ENCODE measurements at regions of chr17 and their contacts with region 1.

Region 1: DNA sequence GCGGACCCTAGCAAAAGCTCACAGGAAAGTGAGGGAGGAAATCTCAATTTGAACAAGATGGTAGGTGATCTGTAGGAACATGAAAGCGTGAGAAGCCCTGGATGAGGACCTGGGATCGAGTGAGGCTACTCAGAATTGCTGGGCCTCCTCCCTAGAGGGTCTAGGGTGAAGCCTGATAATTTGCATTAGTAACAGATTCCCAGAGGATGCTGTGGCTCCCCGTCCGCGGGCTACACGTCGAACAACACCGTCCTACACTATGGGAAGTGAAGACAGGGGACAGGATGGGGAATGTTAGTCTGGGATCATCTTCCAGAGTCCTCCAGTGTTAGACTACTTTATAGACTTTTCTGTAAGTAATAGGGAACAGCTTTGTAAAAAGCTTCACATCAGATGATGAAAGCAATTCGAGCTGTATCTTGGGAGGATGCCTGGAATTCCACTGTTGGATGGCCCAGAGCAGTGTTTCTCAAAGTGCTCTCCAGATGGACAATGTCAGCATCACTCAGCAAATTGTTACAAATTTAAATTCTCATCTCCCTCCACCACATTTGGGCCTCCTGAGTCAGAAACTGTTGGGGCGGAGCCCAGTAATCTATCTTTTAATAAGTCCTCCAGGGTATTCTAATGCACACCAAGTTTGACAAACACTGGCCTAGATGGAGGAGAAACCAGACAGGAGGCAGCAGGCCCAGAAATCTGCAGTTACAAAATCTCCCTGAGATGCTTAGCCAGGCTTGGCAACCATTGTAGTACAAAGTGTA is 6.5 kb downstream of the FNDC8 start:
- DNase-seq: no peak
- CTCF ChIP-seq: no peak

Region 2: DNA sequence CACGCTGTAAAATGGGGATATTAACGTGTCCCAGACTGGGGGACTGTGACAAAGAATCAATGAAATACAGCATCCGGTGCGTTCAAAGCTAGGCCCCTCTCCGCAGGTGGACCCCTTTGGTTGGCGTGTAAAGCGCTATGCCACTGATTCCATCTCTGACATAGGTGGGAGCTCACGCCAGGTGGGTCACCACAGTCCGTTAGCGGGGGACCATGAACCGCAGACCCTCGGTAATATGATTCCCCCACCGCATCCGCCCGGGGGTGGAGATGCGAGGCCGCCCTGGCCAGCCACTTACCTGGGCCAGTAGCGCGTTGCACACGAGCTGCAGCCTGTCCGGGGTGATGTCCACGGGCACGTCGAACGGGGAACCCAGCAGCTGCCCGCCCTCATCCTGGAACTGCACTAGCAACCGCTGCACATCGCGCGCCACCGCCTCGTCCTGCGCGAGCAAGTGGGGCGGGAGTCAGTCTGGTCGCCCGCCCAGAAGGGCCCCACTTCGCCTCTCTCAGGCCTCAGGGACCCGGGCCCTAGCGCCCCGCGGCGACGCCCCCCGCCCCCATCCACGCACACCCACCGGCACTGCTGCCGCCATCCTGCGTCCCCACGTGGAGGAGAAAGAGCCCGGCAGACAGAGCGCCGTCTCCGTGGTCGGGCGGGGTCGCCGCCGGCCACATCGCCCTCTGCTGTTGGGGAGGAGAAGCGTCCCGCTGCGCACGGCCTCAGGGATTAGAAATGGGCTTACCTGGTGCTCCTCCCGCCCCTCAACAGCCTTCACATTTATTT is 13.9 kb after region 1 on chr17 and contains the start of gene NLE1:
- CTCF ChIA-PET with region 1: interaction called, 10 read pairs
- POLR2A ChIA-PET with region 1: no interaction called
- DNase-seq: peak; percentile 94
- CTCF ChIP-seq: peak; percentile 98